ENCODE measurements at regions of chr16 and their contacts with region 1.

Region 1: DNA sequence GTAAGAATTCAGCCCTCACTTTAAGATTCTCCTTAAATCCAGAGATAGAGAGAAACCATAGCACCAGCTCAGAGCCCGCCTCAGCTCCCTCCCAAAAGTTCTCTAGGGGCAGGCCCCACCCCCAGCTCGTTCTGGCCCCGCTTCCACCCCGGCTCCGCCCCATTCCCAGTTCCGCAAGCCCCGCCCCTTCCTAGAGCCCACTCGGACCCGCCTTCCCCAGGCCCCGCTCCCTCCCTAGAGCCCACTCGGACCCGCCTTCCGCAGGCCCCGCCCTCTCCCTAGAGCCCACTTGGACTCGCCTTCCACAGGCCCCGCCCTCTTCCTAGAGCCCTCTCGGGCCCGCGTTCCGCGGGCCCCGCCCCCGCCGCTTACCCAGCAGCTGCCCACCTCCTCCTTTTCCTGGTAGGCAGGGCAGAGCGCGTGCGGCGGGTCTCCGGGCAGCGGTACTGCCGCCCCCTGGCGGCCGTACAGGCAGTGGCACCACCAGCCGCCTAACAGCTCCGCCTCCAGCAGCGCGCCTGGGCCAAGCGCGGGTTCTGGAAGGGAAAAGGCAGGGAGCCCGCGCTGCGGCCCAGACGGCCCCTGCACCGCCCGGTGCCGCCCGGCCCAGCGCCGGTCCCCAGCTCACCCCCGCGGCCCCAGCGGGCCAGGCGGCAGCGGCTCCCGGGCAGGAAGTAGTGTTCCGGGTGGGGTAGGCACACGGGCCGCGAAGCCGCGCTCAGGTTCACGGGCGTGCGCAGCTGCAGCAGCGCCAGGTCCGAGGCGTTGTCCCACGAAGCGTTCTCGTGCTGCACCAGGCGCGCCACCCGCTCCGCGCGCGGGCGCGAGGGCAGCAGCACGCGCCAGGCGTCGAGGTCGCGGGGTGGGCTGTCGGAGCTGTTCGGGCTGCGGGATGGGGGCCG is 6.8 kb upstream of the PRSS8 start:
- DNase-seq: peak; percentile 100
- H3K4me3 Mint-ChIP-seq: peak overlapping the region; percentile 69
- H3K27ac Mint-ChIP-seq: peak overlapping the region; percentile 84
- H3K4me1 Mint-ChIP-seq: peaks cover 13% of the 10 kb centered on the region
- H3K27me3 Mint-ChIP-seq: peaks cover 2% of the 10 kb centered on the region

Region 2: GRCh38 chr16:30997000-30997886 is 145.1 kb before region 1 on chr16:
- CTCF ChIA-PET with region 1: interaction called, 7 read pairs
- POLR2A ChIA-PET with region 1: no interaction called
- intact Hi-C with region 1: loop called (anchors 5 kb)
- DNase-seq: peak; percentile 90
- H3K4me3 Mint-ChIP-seq: peak overlapping the region; percentile 73
- H3K27ac Mint-ChIP-seq: no peak overlapping the region
- H3K4me1 Mint-ChIP-seq: peaks cover 12% of the 10 kb centered on the region
- H3K27me3 Mint-ChIP-seq: peaks cover 1% of the 10 kb centered on the region

Region 3: GRCh38 chr16:31094424-31095120 is 47.8 kb before region 1 on chr16 and contains the start of gene VKORC1:
- CTCF ChIA-PET with region 1: interaction called, 11 read pairs
- POLR2A ChIA-PET with region 1: interaction called, 3 read pairs
- intact Hi-C with region 1: loop called (anchors 1 kb)
- DNase-seq: peak; percentile 95
- H3K4me3 Mint-ChIP-seq: peak within 1 kb of the TSS; percentile 93
- H3K27ac Mint-ChIP-seq: peak within 1 kb of the TSS; percentile 84
- H3K4me1 Mint-ChIP-seq: peaks cover 24% of the 10 kb centered on the region
- H3K27me3 Mint-ChIP-seq: no peaks in the 10 kb centered on the region
- total RNA-seq, gene VKORC1: 67.3 to 72.3 TPM

Region 4: GRCh38 chr16:31157136-31157535 is 14.8 kb after region 1 on chr16:
- CTCF ChIA-PET with region 1: interaction called, 17 read pairs
- POLR2A ChIA-PET with region 1: interaction called, 3 read pairs
- intact Hi-C with region 1: no loop called
- DNase-seq: no peak
- H3K4me3 Mint-ChIP-seq: no peak overlapping the region
- H3K27ac Mint-ChIP-seq: no peak overlapping the region
- H3K4me1 Mint-ChIP-seq: peaks cover 8% of the 10 kb centered on the region
- H3K27me3 Mint-ChIP-seq: peaks cover 4% of the 10 kb centered on the region

Region 5: GRCh38 chr16:31202414-31203375 is 60.3 kb after region 1 on chr16 and contains the start of gene PYCARD:
- CTCF ChIA-PET with region 1: interaction called, 10 read pairs
- POLR2A ChIA-PET with region 1: no interaction called
- intact Hi-C with region 1: no loop called
- DNase-seq: peak; percentile 49
- H3K4me3 Mint-ChIP-seq: peak within 1 kb of the TSS; percentile 78
- H3K27ac Mint-ChIP-seq: peak within 1 kb of the TSS; percentile 69
- H3K4me1 Mint-ChIP-seq: peaks cover 54% of the 10 kb centered on the region
- H3K27me3 Mint-ChIP-seq: no peaks in the 10 kb centered on the region
- total RNA-seq, gene PYCARD: 13.6 to 14.6 TPM

Region 6: GRCh38 chr16:31868691-31869167 is 726.4 kb after region 1 on chr16:
- CTCF ChIA-PET with region 1: interaction called, 13 read pairs
- POLR2A ChIA-PET with region 1: no interaction called
- intact Hi-C with region 1: no loop called
- DNase-seq: peak; percentile 87
- H3K4me3 Mint-ChIP-seq: peak overlapping the region; percentile 59
- H3K27ac Mint-ChIP-seq: peak overlapping the region; percentile 96
- H3K4me1 Mint-ChIP-seq: peaks cover 51% of the 10 kb centered on the region
- H3K27me3 Mint-ChIP-seq: no peaks in the 10 kb centered on the region